ENCODE measurements at regions of chr10 and their contacts with region 1.

Region 1: GRCh38 chr10:128998101-128998805 is 468.8 kb upstream of the MGMT start:
- DNase-seq: no peak
- H3K4me3 ChIP-seq: no peak overlapping the region
- H3K27ac ChIP-seq: no peak overlapping the region
- H3K4me1 ChIP-seq: no peaks in the 10 kb centered on the region
- H3K27me3 ChIP-seq: no peaks in the 10 kb centered on the region
- CTCF ChIP-seq: no peak

Region 2: DNA sequence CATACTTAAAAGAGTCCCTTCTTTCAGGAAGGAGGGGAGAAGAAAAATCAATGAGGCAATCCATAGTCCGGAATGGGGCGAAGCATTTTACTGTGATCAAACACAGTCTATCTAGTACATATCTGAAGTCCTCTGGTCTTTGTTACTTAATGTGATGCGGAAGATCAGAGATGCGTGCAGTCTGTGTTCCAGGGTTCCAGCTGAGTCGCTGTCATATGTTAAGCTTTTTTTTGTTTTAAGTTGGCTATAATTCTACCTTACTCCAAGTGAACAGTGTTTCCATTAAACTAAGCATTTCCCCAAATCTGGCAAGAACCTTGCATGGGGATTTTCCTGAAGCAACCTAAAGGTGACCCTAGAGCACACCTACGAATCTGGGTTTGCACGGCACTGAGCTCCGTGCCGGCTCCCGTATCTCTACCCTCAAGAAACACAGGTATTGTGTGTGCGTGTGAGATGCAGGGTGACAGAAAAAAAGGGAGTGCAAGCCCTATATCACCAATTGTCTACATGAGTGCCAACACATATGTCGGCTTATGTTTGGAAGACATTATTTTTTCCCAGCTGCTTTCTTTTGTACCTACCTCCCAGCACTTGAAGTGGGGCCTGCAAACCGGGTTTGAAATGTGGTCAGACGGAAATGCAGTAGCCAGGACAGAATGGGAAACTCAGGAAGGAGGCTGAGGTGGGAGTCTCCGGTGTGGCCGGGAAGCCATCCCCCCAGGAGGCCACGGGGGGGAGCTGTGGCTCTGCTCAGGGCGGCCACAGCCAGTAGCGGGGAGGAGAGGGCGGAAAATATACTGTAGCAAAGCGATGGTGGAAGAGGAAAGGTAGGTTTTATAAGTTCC is 33.0 kb after region 1 on chr10:
- CTCF ChIA-PET with region 1: no interaction called
- dilution Hi-C with region 1: no loop called
- in situ Hi-C with region 1: no loop called
- intact Hi-C with region 1: no loop called
- DNase-seq: peak; percentile 1
- H3K4me3 ChIP-seq: no peak overlapping the region
- H3K27ac ChIP-seq: no peak overlapping the region
- H3K4me1 ChIP-seq: no peaks in the 10 kb centered on the region
- H3K27me3 ChIP-seq: no peaks in the 10 kb centered on the region
- CTCF ChIP-seq: peak; percentile 22 to 41

Region 3: GRCh38 chr10:129063877-129064276 is 65.6 kb after region 1 on chr10:
- CTCF ChIA-PET with region 1: no interaction called
- dilution Hi-C with region 1: loop called (anchors 5 kb)
- in situ Hi-C with region 1: no loop called
- intact Hi-C with region 1: no loop called
- DNase-seq: no peak
- H3K4me3 ChIP-seq: no peak overlapping the region
- H3K27ac ChIP-seq: no peak overlapping the region
- H3K4me1 ChIP-seq: no peaks in the 10 kb centered on the region
- H3K27me3 ChIP-seq: no peaks in the 10 kb centered on the region
- CTCF ChIP-seq: no peak

Measured in mammary epithelial cell (primary cell).